ENCODE measurements at regions of chr14 and their contacts with region 1.

Region 1: GRCh38 chr14:24013654-24014514 is 25.2 kb downstream of the DHRS4L2 start:
- DNase-seq: peak; percentile 58 to 77
- ATAC-seq: peak; percentile 85 to 87
- H3K4me3 ChIP-seq: no peak overlapping the region
- H3K27ac ChIP-seq: no peak overlapping the region
- H3K4me1 ChIP-seq: peaks cover 8% of the 10 kb centered on the region; the same call in 2 of the 3 replicates
- CTCF ChIP-seq: peak; percentile 93
- EP300 ChIP-seq: no peak
- POLR2A ChIP-seq: no peak
- RAD21 ChIP-seq: peak; percentile 95 to 98

Region 2: DNA sequence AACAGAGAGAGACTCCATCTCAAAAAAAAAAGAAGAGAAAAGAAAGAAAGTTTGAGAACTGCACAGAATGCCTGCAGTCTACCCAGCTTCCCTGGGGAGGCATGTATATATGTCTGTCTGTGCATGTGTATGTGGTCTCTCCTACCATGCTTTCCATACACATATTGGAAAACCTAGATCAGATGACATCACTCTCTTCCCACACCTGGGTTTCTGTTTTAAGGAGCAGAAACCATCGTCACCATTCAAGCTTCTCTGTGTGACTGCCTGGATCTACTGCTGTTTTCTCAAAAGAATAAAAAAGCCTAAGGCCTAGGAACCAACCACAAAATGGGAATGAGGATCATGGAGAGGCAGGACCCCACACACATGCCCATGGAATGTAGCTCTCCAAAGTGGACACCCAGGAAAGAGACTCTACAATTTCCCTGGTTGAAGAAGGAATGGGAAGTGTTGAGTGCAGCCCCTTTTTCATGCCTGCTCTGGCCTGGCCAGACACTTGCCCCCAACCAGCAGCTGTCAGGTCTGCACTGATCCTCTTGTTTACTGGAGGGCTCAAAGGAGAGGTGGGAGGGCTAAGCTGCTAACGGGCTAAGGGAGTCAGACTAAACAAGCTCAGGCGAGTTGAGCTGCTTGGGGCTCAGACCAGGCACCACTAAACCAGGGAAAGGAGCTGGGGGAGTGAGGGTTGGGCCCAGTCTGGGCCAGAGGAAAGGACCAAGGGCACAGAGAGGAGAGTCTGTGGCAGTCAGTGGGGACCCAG is 72.5 kb after region 1 on chr14:
- CTCF ChIA-PET with region 1: interaction called, 24 read pairs
- POLR2A ChIA-PET with region 1: no interaction called
- DNase-seq: no peak
- ATAC-seq: no peak
- H3K4me3 ChIP-seq: no peak overlapping the region
- H3K27ac ChIP-seq: no peak overlapping the region
- H3K4me1 ChIP-seq: peaks cover 5% of the 10 kb centered on the region
- CTCF ChIP-seq: no peak
- EP300 ChIP-seq: no peak
- POLR2A ChIP-seq: no peak
- RAD21 ChIP-seq: no peak

Measured in A549 (cell line).